Pancreas (tissue), 10 donors: ENCODE measurements at regions of chr10 and their contacts with region 1.

Region 1: GRCh38 chr10:27658788-27659187 is 86.8 kb downstream of the MKX start:
- DNase-seq: no peak
- ATAC-seq: no peak
- H3K4me3 ChIP-seq: no peak overlapping the region
- H3K27ac ChIP-seq: no peak overlapping the region
- H3K4me1 ChIP-seq: no peaks in the 10 kb centered on the region
- H3K27me3 ChIP-seq: no peaks in the 10 kb centered on the region
- CTCF ChIP-seq: no peak

Region 2: GRCh38 chr10:27446091-27446918 is 212.5 kb before region 1 on chr10:
- intact Hi-C with region 1: loop called in 1 of 3 experiments (anchors 5 kb)
- DNase-seq: no peak
- ATAC-seq: peak in 2 of 4 donors; percentile 60 to 70
- H3K4me3 ChIP-seq: no peak overlapping the region
- H3K27ac ChIP-seq: no peak overlapping the region
- H3K4me1 ChIP-seq: no peaks in the 10 kb centered on the region
- H3K27me3 ChIP-seq: no peaks in the 10 kb centered on the region
- CTCF ChIP-seq: peak in 3 of 4 donors; percentile 19 to 40 (median 30)

Region 3: DNA sequence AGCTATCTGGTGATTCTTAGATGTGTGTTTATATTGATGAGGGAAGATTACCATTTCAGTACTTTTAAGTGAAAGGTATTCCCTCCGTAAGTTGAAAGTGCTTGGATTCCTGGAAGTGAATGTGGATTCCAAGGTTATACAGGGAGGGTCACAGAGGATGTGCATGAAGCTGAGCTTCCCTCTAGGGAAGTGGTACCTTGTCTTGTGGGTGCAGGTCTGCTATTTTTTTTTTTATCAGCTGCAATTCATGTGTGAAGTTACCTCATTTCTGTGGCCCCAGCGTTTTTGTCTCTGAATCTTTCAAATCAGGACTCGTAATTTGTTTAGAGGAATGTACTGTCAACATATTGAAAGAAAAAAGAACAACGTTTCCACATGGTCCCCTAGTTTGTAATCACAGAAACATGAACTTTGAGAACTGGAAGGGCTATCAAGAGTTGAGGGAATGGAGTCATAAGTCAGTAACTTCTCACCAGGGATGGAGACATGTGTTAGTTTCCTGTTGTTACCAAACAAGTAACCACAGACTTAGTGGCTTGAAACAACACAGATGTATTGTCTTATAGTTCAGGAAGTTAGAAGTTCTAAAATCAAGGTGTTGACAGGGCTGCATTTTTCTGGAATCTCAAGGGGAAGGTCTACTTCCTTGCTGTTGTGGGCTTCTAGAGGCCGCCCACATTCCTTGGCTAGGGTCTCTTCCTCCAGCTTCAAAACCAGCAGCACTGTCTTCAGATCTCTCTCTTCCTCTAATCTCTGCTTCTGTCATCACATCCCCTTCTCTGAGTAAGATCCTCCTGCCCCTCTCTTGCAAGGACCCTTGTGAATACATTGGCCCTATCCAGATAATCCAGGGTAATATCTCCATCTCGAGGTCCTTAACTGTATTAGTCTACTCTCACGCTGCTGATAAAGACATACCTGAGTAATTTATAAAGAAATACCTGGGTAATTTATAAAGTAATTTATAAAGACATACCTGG is 90.3 kb before region 1 on chr10:
- intact Hi-C with region 1: loop called in 1 of 3 experiments (anchors 10 kb)
- DNase-seq: no peak
- ATAC-seq: no peak
- H3K4me3 ChIP-seq: no peak overlapping the region
- H3K27ac ChIP-seq: no peak overlapping the region
- H3K4me1 ChIP-seq: no peaks in the 10 kb centered on the region
- H3K27me3 ChIP-seq: no peaks in the 10 kb centered on the region
- CTCF ChIP-seq: no peak